ENCODE measurements at regions of chr10 and their contacts with region 1.

Region 1: DNA sequence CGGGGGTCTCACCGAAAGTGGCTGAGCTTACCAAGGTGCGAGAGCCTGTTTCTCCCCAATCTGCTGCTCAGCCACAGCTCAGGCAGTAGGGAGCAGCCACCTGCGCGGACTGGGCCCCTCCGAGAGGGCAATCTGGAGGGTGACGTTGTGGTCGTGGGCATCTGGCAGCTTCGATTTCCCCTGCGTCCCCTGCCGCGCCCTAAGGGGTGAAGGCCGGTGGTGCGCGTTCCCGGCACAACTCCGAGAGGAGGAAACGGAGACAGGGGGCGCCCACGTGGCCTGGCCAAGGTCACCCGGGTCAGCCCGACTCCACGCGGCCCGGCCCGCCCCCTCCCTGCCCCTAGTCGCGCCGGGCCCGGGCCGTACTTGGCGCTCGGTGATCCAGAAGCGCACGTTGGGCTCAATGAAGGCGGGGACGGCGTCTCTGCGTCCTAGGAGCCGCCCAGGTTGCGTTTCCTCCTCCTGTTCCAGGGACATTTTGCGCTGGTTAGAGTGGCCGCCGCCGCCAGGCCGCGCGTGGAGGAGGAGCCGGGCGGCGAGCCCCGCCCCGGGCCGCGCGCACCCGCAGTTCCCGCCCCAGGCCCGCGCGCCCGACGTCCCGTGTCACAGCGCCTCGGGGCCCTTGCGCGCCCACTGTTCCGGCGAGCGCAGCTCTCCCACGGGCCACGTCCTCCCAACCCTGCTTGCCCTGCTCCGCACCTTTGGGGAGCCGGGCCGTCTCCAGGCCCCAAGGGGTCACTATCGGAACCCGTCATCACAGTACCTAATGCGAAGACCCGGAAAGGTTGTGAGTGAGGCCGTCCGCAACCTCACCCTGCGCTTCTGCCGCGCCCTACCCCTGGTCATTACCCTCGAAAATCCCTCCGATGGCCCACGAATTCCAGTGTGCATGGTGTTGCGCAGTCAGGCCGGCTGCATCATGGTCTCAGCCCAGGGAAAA is at the start of gene SFXN4:
- DNase-seq: peak; percentile 81 to 89
- ATAC-seq: peak; percentile 94 to 97 (median 95)
- H3K4me3 ChIP-seq: peak within 1 kb of the TSS; percentile 72
- H3K4me3 Mint-ChIP-seq: peak within 1 kb of the TSS; percentile 89
- H3K27ac ChIP-seq: peak within 1 kb of the TSS; percentile 72
- H3K27ac Mint-ChIP-seq: peak within 1 kb of the TSS; percentile 77 to 94
- H3K4me1 ChIP-seq: peaks cover 18% of the 10 kb centered on the region
- H3K4me1 Mint-ChIP-seq: peaks cover 15 to 17% of the 10 kb centered on the region in 2 donors
- H3K27me3 ChIP-seq: no peaks in the 10 kb centered on the region
- H3K27me3 Mint-ChIP-seq: no peaks in the 10 kb centered on the region
- CTCF ChIP-seq: no peak
- total RNA-seq, gene SFXN4: 5.5 to 13.7 (median 8.1) TPM

Region 2: GRCh38 chr10:119120413-119120867 is 45.0 kb before region 1 on chr10:
- intact Hi-C with region 1: loop called (anchors 1 kb)
- DNase-seq: peak in 1 of 2 donors; percentile 63
- ATAC-seq: peak; percentile 88 to 97 (median 96)
- H3K4me3 ChIP-seq: no peak overlapping the region
- H3K4me3 Mint-ChIP-seq: no peak overlapping the region
- H3K27ac ChIP-seq: peak overlapping the region; percentile 64
- H3K27ac Mint-ChIP-seq: peak overlapping the region; percentile 79 to 82
- H3K4me1 ChIP-seq: peaks cover 17% of the 10 kb centered on the region
- H3K4me1 Mint-ChIP-seq: peaks cover 7% of the 10 kb centered on the region in 2 donors
- H3K27me3 ChIP-seq: no peaks in the 10 kb centered on the region
- H3K27me3 Mint-ChIP-seq: no peaks in the 10 kb centered on the region
- CTCF ChIP-seq: no peak

Region 3: GRCh38 chr10:119178372-119179119 is 13.1 kb after region 1 on chr10 and contains the start of gene PRDX3:
- intact Hi-C with region 1: loop called (anchors 1 kb)
- DNase-seq: peak; percentile 90 to 94
- ATAC-seq: peak; percentile 98 to 99 (median 99)
- H3K4me3 ChIP-seq: peak within 1 kb of the TSS; percentile 96
- H3K4me3 Mint-ChIP-seq: peak within 1 kb of the TSS; percentile 97
- H3K27ac ChIP-seq: peak within 1 kb of the TSS; percentile 75
- H3K27ac Mint-ChIP-seq: peak within 1 kb of the TSS; percentile 87 to 98
- H3K4me1 ChIP-seq: peaks cover 19% of the 10 kb centered on the region
- H3K4me1 Mint-ChIP-seq: peaks cover 6 to 13% of the 10 kb centered on the region in 2 donors
- H3K27me3 ChIP-seq: no peaks in the 10 kb centered on the region
- H3K27me3 Mint-ChIP-seq: no peaks in the 10 kb centered on the region
- CTCF ChIP-seq: peak; percentile 14
- total RNA-seq, gene PRDX3: 12.5 to 17.4 (median 15.3) TPM

Region 4: GRCh38 chr10:119189811-119190282 is 24.4 kb after region 1 on chr10:
- intact Hi-C with region 1: no loop called
- DNase-seq: peak in 1 of 2 donors; percentile 49
- ATAC-seq: peak; percentile 30 to 92 (median 53)
- H3K4me3 ChIP-seq: no peak overlapping the region
- H3K4me3 Mint-ChIP-seq: no peak overlapping the region
- H3K27ac ChIP-seq: no peak overlapping the region
- H3K27ac Mint-ChIP-seq: peak overlapping the region in 1 of 2 donors; percentile 18
- H3K4me1 ChIP-seq: peaks cover 14% of the 10 kb centered on the region
- H3K4me1 Mint-ChIP-seq: peaks cover 10 to 12% of the 10 kb centered on the region in 2 donors
- H3K27me3 ChIP-seq: no peaks in the 10 kb centered on the region
- H3K27me3 Mint-ChIP-seq: peaks cover 0 to 12% of the 10 kb centered on the region in 2 donors
- CTCF ChIP-seq: no peak

Region 5: GRCh38 chr10:119315128-119316001 is 149.9 kb after region 1 on chr10:
- intact Hi-C with region 1: no loop called
- DNase-seq: peak; percentile 59 to 64
- ATAC-seq: peak; percentile 26 to 49 (median 43)
- H3K4me3 ChIP-seq: no peak overlapping the region
- H3K4me3 Mint-ChIP-seq: no peak overlapping the region
- H3K27ac ChIP-seq: no peak overlapping the region
- H3K27ac Mint-ChIP-seq: peak overlapping the region; percentile 48 to 92
- H3K4me1 ChIP-seq: peaks cover 52% of the 10 kb centered on the region
- H3K4me1 Mint-ChIP-seq: peaks cover 85 to 88% of the 10 kb centered on the region in 2 donors
- H3K27me3 ChIP-seq: peaks cover 23% of the 10 kb centered on the region
- H3K27me3 Mint-ChIP-seq: peaks cover 15 to 28% of the 10 kb centered on the region in 2 donors
- CTCF ChIP-seq: no peak